Ovary (tissue), 10 donors: ENCODE measurements at regions of chr16 and their contacts with region 1.

Region 1: DNA sequence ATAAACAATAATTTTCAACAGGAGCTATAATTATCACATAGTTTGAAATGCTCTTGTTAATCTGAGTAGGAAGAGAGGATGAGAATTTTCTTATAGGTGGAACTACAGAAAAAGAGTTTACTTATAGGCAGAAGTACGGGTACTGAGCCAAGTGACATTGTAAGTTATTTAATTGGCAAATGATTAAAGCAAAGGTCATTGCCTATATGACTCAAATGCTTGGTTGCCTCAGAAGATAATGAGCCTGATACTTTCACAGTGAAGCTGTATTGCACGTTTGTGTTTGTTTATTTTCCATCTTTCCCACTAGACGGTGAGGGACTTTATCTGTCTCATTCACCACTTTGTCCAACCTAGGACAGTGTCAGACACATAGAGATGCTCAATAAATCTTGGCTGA is 749.3 kb downstream of the MAF start:
- DNase-seq: no peak
- H3K4me3 ChIP-seq: no peak overlapping the region
- H3K27ac ChIP-seq: no peak overlapping the region
- H3K4me1 ChIP-seq: no peaks in the 10 kb centered on the region
- H3K27me3 ChIP-seq: no peaks in the 10 kb centered on the region
- CTCF ChIP-seq: no peak
- EP300 ChIP-seq: no peak
- POLR2A ChIP-seq: no peak

Region 2: DNA sequence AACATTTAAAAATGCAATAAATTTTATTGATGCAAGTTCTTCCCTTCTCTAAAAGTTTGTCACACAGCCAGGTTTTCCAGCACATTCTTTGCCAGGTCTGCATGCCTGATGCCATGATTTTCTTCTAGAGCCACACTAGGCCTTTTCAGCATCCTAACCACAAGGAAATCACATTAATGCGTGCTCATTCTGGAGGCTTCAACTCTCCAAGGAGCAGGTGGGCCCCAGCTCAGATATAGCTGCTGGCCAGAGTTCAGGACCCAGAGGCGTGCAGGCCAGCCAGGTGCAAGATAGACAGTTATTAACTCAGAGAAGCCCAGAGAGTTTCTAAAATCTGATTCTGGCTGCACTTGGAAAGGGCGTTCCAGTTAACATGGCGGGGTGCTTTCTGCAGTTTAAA is 873.8 kb after region 1 on chr16:
- intact Hi-C with region 1: loop called in 1 of 4 experiments (anchors 5 kb)
- DNase-seq: no peak
- H3K4me3 ChIP-seq: no peak overlapping the region
- H3K27ac ChIP-seq: no peak overlapping the region
- H3K4me1 ChIP-seq: peaks cover 4% of the 10 kb centered on the region
- H3K27me3 ChIP-seq: no peaks in the 10 kb centered on the region
- CTCF ChIP-seq: no peak
- EP300 ChIP-seq: no peak
- POLR2A ChIP-seq: no peak